K562 (cell line): ENCODE measurements at regions of chr1 and their contacts with region 1.

Region 1: DNA sequence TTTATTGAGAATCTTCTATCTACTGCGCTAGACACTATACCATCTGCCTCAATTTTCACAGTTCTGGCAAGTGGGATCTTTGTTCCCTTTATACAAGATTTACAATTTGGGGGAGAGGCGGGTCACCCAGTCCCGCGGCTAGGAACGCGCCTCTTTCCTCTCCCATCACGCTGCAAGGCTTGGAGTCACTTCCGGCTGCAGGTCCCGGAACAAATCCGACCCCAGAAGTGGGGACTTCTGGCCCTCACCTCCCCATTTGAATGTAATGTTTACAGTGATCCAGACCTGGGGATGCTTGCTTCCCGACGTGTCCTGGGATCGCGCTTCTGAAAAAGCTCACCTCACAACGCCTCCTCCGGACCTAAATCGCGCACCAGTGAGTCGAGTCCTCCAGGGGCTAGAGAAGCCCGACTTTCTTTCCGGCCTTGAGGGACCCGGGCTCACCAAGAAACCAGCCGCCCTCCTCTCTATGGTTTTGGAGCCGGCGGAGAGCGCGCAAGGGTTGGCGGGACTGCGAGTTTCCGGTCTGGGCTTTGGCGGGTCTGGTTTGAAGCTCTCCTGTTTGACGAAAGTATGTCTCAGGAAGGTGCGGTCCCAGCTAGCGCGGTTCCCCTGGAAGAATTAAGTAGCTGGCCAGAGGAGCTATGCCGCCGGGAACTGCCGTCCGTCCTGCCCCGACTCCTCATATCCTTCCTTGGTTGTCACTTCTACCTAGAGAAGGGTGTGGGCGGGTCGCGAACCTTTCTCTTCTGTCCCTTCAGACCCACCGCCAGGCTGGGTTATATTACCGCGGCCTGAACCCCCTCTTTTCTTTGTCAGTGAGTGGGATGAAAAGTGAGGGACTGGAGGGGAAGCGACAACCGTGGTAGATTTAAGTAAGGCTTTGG is at the start of gene METTL18:
- DNase-seq: peak; percentile 94 to 98 (median 95)
- ATAC-seq: peak; percentile 98
- H3K4me3 ChIP-seq: peak within 1 kb of the TSS; percentile 65
- H3K27ac ChIP-seq: peak within 1 kb of the TSS; percentile 85
- H3K4me1 ChIP-seq: peaks cover 0 to 8% of the 10 kb centered on the region in 2 experiments; a peak in 2 of 5 replicates
- H3K27me3 ChIP-seq: no peaks in the 10 kb centered on the region
- CTCF ChIP-seq: peak in 1 of 3 experiments; percentile 9; a peak in 1 of 6 replicates
- EP300 ChIP-seq: peak; percentile 59; the same call in 1 of the 2 replicates
- POLR2A ChIP-seq: peak; percentile 93
- RAD21 ChIP-seq: no peak
- polyA plus RNA-seq, gene METTL18: 36.4 to 40.2 TPM

Region 2: GRCh38 chr1:169485544-169486278 is 309.1 kb before region 1 on chr1 and contains the start of gene SLC19A2:
- CTCF ChIA-PET with region 1: no interaction called
- POLR2A ChIA-PET with region 1: no interaction called
- in situ Hi-C with region 1: no loop called
- intact Hi-C with region 1: loop called (anchors 5 kb)
- DNase-seq: peak; percentile 100
- ATAC-seq: peak; percentile 95
- H3K4me3 ChIP-seq: peak within 1 kb of the TSS; percentile 79
- H3K27ac ChIP-seq: peak within 1 kb of the TSS; percentile 89
- H3K4me1 ChIP-seq: peaks cover 13 to 23% of the 10 kb centered on the region in 2 experiments; a peak in 4 of 5 replicates
- H3K27me3 ChIP-seq: no peaks in the 10 kb centered on the region
- CTCF ChIP-seq: peak; percentile 58 to 72 (median 65)
- EP300 ChIP-seq: no peak
- POLR2A ChIP-seq: peak; percentile 96
- RAD21 ChIP-seq: peak; percentile 37 to 44
- polyA plus RNA-seq, gene SLC19A2: 7.4 to 8.9 TPM